ENCODE measurements at regions of chr17 and their contacts with region 1.

Region 1: DNA sequence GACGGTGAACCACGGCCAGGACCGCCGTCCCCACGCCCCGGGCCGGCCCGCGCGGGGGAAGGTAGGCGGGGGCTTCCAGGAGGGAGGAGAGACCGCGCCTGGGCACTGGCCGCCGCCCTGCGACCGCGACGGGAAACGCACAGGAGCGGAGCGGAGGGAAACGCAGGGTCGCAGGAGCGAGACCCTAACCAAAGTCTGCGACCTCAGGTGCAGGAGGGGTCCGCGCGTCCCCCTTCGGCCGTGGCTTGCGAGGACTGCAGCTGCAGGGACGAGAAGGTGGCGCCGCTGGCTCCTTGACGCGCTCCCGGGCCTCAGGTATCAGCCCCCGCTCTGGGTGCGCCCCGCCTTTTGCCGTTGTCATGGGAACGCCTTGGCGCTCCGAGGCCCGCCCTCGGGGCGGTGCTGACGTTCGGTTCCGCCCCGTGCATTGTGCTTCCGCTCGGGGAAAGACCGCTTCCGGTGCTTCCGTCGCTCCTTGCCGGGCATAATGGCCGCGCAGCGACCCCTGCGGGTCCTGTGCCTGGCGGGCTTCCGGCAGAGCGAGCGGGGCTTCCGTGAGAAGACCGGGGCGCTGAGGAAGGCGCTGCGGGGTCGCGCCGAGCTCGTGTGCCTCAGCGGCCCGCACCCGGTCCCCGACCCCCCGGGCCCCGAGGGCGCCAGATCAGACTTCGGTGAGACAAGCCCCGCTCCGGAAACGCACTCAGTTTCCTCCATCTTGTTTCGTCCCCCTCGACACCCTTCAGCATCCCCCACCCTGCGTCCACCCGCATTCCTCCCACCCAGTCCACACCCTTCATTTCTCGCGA is at the start of gene OVCA2:
- DNase-seq: peak; percentile 96 to 99
- ATAC-seq: peak; percentile 96
- H3K4me3 ChIP-seq: peak within 1 kb of the TSS; percentile 44 to 55
- H3K27ac ChIP-seq: peak within 1 kb of the TSS in 1 of 2 donors; percentile 43
- H3K4me1 ChIP-seq: no peaks in the 10 kb centered on the region
- H3K27me3 ChIP-seq: no peaks in the 10 kb centered on the region
- total RNA-seq, gene OVCA2: 14.2 to 19.8 TPM

Region 2: DNA sequence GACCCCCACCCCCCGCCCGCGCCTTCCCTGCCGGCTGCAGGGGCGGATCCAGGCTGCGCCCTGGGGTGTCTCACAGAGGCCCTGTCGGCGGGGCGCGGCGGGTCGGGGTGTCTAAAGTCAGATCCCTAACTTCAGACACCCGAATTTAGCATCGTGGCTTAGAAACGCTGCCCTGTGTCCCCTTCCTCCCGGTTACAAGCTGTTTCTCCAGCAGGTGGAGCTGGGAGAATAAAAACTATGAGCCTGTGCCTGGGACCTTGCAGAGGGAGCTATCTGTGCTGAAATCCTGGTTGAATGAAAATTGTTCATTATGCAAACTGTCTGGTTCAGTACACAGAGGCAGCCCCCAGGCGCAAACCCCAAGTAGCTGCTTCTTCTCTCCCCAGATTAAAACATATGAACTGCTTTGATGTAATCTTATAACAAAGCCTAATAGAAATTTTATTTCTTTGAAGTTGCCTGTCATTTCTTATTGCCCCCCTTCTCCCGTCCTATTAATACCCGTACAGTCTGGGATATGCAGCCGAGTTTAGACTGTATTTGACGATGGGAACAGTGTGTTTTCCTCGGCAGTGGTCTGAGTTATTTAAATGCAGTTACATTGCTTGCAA is 133.0 kb before region 1 on chr17:
- intact Hi-C with region 1: loop called (anchors 5 kb)
- DNase-seq: peak in 1 of 2 donors; percentile 65
- ATAC-seq: peak; percentile 88
- H3K4me3 ChIP-seq: no peak overlapping the region
- H3K27ac ChIP-seq: no peak overlapping the region
- H3K4me1 ChIP-seq: no peaks in the 10 kb centered on the region
- H3K27me3 ChIP-seq: no peaks in the 10 kb centered on the region

Measured in aorta (tissue), 5 donors.